GM12878 (cell line): ENCODE measurements at regions of chr12 and their contacts with region 1.

Region 1: DNA sequence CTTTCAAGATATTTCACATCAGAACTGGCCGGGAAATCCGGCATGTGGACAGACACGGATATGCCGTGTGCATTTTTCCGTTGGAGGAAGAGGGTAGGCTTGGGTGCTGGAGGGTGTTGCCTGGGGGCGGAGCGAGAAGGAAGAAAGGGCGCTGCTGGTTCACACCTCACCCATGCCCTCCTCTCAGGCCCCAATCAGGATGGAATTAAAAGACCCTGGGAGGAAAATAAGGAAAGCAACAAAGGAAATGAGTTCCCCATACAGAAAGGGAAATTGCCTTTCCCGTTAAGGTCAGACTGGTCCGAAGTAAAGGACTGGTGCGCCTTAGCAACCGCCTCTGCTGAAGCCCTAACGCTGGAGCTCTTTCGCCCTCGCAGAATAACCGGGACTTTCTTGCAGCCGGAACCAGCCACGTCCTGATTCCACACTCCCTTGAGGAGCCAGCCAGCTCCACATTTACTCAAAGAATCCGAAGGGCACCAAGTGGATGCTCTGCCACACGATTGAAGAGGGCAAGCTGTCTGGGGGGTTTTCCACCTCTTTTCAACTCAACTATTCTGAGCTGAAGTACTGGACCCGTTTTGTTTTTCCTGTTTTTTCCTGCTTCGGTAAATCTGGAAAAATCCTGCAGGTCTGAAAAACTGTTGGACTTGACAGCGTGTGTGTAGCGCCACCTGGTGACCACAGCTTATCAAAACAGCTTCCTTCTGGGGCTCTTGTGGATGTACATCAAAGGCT is 37.7 kb upstream of the BCL2L14 start:
- DNase-seq: peak; percentile 66
- ATAC-seq: peak; percentile 68
- H3K4me3 ChIP-seq: peak overlapping the region; percentile 69
- H3K27ac ChIP-seq: peak overlapping the region; percentile 89
- H3K4me1 ChIP-seq: peaks cover 36% of the 10 kb centered on the region
- H3K27me3 ChIP-seq: no peaks in the 10 kb centered on the region
- CTCF ChIP-seq: peak; percentile 81 to 86 (median 82)
- EP300 ChIP-seq: peak in 1 of 2 experiments; percentile 21; a peak in 1 of 4 replicates
- POLR2A ChIP-seq: no peak
- RAD21 ChIP-seq: peak; percentile 96

Region 2: GRCh38 chr12:11568762-11569478 is 464.1 kb before region 1 on chr12:
- CTCF ChIA-PET with region 1: interaction called, 8 read pairs
- POLR2A ChIA-PET with region 1: interaction called, 5 read pairs
- RAD21 ChIA-PET with region 1: interaction called, 12 read pairs
- SMC1A ChIA-PET with region 1: interaction called, 214 read pairs
- in situ Hi-C with region 1: loop called (anchors 10 kb)
- intact Hi-C with region 1: no loop called
- DNase-seq: peak; percentile 96
- ATAC-seq: peak; percentile 77
- H3K4me3 ChIP-seq: peak overlapping the region; percentile 48
- H3K27ac ChIP-seq: peak overlapping the region; percentile 98
- H3K4me1 ChIP-seq: peaks cover 46% of the 10 kb centered on the region
- H3K27me3 ChIP-seq: no peaks in the 10 kb centered on the region
- CTCF ChIP-seq: no peak
- EP300 ChIP-seq: peak; percentile 99
- POLR2A ChIP-seq: no peak
- RAD21 ChIP-seq: no peak

Region 3: GRCh38 chr12:11648831-11649702 is 384.0 kb before region 1 on chr12 and contains the start of gene ETV6:
- CTCF ChIA-PET with region 1: interaction called, 16 read pairs
- POLR2A ChIA-PET with region 1: interaction called, 5 read pairs
- RAD21 ChIA-PET with region 1: interaction called, 8 read pairs
- SMC1A ChIA-PET with region 1: interaction called, 22 read pairs
- in situ Hi-C with region 1: loop called (anchors 5 kb)
- intact Hi-C with region 1: loop called (anchors 2 kb)
- DNase-seq: peak; percentile 86
- ATAC-seq: peak; percentile 31
- H3K4me3 ChIP-seq: peak within 1 kb of the TSS; percentile 85
- H3K27ac ChIP-seq: peak within 1 kb of the TSS; percentile 99
- H3K4me1 ChIP-seq: peaks cover 3% of the 10 kb centered on the region; the same call in 1 of the 2 replicates
- H3K27me3 ChIP-seq: no peaks in the 10 kb centered on the region
- CTCF ChIP-seq: no peak
- EP300 ChIP-seq: peak; percentile 33 to 46; a peak in 3 of 4 replicates
- POLR2A ChIP-seq: peak; percentile 80
- RAD21 ChIP-seq: no peak; the same call in 1 of the 2 replicates
- polyA plus RNA-seq, gene ETV6: 6.6 to 10.4 TPM

Region 4: DNA sequence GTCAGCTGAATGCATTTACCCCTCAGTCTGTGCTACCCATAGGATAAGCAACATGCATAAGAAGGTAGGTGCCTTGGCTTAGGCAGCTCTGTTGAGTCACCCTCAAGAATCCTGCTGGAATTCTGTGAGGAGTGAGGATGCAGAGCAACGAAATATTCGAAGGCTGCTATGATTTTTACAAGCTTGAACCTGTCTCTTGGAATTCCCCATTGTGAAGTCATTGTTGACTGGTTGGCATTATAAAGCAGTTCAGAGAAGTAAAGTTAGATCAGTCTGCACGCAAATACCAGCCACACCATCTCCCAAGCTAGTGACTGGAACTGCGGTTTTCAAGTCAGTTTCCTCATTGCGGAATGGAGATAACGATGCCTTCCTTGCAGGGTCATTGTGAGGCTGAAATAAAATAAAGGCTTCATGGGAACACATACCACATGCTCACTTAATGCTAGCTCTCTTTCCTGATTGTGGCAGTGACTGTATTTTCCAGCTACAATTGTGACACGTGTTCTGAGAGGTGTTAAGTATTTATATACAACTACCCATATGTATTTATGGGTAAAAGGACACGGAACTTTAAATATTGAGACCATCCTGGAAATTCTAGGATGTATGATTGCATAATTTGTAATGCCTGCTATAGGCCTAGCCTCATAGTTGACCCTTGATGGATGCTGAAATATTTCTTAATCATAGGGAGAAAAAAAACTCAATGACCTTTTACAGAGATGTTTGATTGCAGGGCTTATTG is 286.8 kb before region 1 on chr12:
- CTCF ChIA-PET with region 1: interaction called, 5 read pairs
- POLR2A ChIA-PET with region 1: interaction called, 3 read pairs
- RAD21 ChIA-PET with region 1: interaction called, 18 read pairs
- SMC1A ChIA-PET with region 1: interaction called, 18 read pairs
- in situ Hi-C with region 1: no loop called
- intact Hi-C with region 1: no loop called
- DNase-seq: peak; percentile 93
- ATAC-seq: peak; percentile 57
- H3K4me3 ChIP-seq: peak overlapping the region; percentile 17; the same call in 1 of the 2 replicates
- H3K27ac ChIP-seq: peak overlapping the region; percentile 100
- H3K4me1 ChIP-seq: peaks cover 88% of the 10 kb centered on the region
- H3K27me3 ChIP-seq: no peaks in the 10 kb centered on the region
- CTCF ChIP-seq: no peak
- EP300 ChIP-seq: peak; percentile 91 to 94
- POLR2A ChIP-seq: peak; percentile 46; the same call in 1 of the 2 replicates
- RAD21 ChIP-seq: peak; percentile 12; the same call in 1 of the 2 replicates

Region 5: DNA sequence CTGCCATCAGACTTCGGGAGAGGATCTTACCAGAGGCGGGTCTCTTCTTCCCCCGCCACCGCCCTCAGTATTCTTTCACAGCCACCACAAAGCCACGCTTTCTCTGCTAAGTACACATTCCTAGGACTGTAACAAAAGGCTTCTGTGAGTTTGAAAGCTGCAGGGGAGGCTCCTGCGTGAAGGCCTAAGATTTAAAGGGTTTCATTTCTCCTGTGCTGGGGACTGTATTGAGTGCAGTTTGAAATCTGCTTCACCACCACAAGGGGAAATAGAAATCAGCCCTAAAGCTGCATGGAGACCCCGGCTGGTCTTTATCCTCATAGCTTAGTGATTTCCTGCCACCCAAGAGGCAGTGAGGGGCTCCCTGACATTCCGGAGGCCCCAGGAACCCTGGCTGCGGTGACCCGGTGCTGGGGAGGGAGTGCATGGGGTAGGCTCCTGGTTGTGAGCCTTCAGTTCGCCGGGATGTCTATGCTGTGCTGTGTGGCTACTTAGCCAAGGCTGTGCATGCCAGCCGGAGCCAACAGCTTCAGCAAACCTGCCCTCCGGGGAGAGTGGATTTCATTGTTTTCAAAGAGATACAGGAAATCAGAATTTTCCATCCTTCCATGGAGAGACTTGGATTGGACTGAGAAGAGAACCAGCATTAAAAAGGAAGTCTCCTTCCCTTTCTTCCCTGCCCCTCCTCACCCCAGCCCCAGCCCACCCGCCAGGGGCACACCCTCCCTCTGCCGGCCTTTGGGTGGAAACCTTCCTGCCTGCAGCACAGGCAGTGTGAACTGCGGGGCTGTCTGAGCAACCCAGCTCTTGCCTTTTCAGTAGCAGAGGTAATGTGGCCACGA is 220.2 kb before region 1 on chr12:
- CTCF ChIA-PET with region 1: interaction called, 3 read pairs
- POLR2A ChIA-PET with region 1: no interaction called
- RAD21 ChIA-PET with region 1: interaction called, 11 read pairs
- SMC1A ChIA-PET with region 1: interaction called, 4 read pairs
- in situ Hi-C with region 1: no loop called
- intact Hi-C with region 1: no loop called
- DNase-seq: no peak
- ATAC-seq: peak; percentile 89
- H3K4me3 ChIP-seq: peak overlapping the region; percentile 61
- H3K27ac ChIP-seq: peak overlapping the region; percentile 93
- H3K4me1 ChIP-seq: peaks cover 41% of the 10 kb centered on the region
- H3K27me3 ChIP-seq: no peaks in the 10 kb centered on the region
- CTCF ChIP-seq: peak; percentile 19 to 38 (median 20); a peak in 4 of 6 replicates
- EP300 ChIP-seq: no peak
- POLR2A ChIP-seq: peak; percentile 40; the same call in 1 of the 2 replicates
- RAD21 ChIP-seq: peak; percentile 34; the same call in 1 of the 2 replicates

Region 6: DNA sequence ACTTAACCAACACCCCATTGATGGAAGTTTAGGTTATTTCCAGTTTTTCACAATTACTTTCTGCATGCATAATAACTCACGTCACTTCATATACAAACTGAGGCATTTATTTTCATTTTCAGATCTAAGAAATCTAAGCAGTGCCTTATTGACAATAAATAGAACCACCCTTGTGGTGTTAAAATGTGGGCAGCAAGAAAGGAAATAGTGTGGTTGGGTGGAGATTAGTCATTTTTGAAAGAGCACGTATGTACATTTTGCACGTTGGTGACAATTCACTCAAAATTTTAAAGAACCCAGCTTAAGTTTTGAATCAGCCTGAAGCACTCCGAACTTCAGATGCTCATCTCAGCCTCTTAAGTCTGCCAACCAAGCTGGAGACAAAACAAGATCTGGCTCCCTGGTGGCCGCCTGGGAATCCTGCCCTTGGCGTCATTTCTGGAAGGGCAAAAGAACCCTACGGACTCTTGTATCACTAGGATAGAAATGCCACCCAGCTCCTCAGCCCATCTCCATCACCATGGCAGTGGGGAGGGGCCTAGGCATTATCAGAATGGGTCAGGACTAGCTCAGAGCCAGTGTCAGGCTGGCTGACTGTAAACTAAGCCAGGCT is 51.8 kb before region 1 on chr12:
- CTCF ChIA-PET with region 1: interaction called, 12 read pairs
- POLR2A ChIA-PET with region 1: no interaction called
- RAD21 ChIA-PET with region 1: interaction called, 15 read pairs
- SMC1A ChIA-PET with region 1: interaction called, 31 read pairs
- in situ Hi-C with region 1: no loop called
- intact Hi-C with region 1: loop called (anchors 1 kb)
- DNase-seq: peak; percentile 98
- ATAC-seq: peak; percentile 90
- H3K4me3 ChIP-seq: peak overlapping the region; percentile 19; the same call in 1 of the 2 replicates
- H3K27ac ChIP-seq: peak overlapping the region; percentile 96
- H3K4me1 ChIP-seq: peaks cover 23% of the 10 kb centered on the region
- H3K27me3 ChIP-seq: no peaks in the 10 kb centered on the region
- CTCF ChIP-seq: no peak
- EP300 ChIP-seq: peak; percentile 99
- POLR2A ChIP-seq: no peak
- RAD21 ChIP-seq: peak; percentile 26; the same call in 1 of the 2 replicates

Region 7: GRCh38 chr12:12327802-12328201 is 294.8 kb after region 1 on chr12:
- CTCF ChIA-PET with region 1: interaction called, 26 read pairs
- POLR2A ChIA-PET with region 1: no interaction called
- RAD21 ChIA-PET with region 1: interaction called, 7 read pairs
- SMC1A ChIA-PET with region 1: interaction called, 3 read pairs
- in situ Hi-C with region 1: no loop called
- intact Hi-C with region 1: loop called (anchors 2 kb)
- DNase-seq: peak; percentile 25
- ATAC-seq: peak; percentile 74
- H3K4me3 ChIP-seq: no peak overlapping the region
- H3K27ac ChIP-seq: no peak overlapping the region
- H3K4me1 ChIP-seq: no peaks in the 10 kb centered on the region
- H3K27me3 ChIP-seq: no peaks in the 10 kb centered on the region
- CTCF ChIP-seq: peak; percentile 56 to 76 (median 74); a peak in 5 of 6 replicates
- EP300 ChIP-seq: no peak
- POLR2A ChIP-seq: no peak
- RAD21 ChIP-seq: peak; percentile 85